Mucosa of descending colon (tissue), 3 donors: ENCODE measurements at regions of chr3 and their contacts with region 1.

Region 1: DNA sequence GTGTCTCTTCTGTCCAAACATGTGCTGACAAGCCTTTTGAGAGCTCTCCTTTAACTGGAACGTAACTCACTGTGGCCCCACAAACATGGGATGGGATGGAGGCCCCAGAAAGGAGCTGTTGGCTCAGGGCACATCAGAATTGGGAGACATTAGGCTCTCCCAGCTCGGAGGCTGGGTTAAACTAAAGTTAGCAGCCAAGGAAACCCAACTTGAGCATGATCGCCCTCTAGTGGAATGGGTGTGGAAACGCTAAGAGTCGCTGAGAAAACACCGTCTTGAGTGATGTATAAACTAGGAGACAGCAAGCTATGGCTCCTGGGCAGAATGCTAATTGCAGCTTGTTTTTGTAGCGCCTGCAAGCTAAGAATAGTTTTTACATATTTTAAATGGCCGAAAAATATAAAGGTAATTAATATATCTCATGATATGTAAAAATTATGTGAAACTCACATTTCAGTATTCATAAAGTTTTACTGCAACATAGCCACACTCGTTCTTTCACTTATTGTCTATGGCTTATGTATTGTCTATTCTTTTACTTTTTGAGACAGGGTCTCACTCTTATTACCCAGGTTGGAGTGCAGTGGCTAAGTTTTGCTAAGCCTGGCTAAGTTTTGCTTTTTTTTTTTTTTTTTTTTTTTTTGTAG is 138.8 kb upstream of the HACD2 start:
- DNase-seq: peak in 1 of 3 donors; percentile 65
- ATAC-seq: peak; percentile 85
- H3K4me3 ChIP-seq: no peak overlapping the region
- H3K4me1 ChIP-seq: no peaks in the 10 kb centered on the region
- CTCF ChIP-seq: peak; percentile 60

Region 2: GRCh38 chr3:123390865-123391600 is 332.6 kb before region 1 on chr3:
- intact Hi-C with region 1: no loop called
- DNase-seq: no peak
- ATAC-seq: no peak
- H3K4me3 ChIP-seq: no peak overlapping the region
- H3K4me1 ChIP-seq: no peaks in the 10 kb centered on the region
- CTCF ChIP-seq: no peak

Region 3: GRCh38 chr3:123642182-123642956 is 81.3 kb before region 1 on chr3:
- intact Hi-C with region 1: loop called in 1 of 2 experiments (anchors 5 kb)
- DNase-seq: peak; percentile 67 to 88 (median 78)
- ATAC-seq: peak; percentile 95
- H3K4me3 ChIP-seq: no peak overlapping the region
- H3K4me1 ChIP-seq: no peaks in the 10 kb centered on the region
- CTCF ChIP-seq: peak; percentile 66

Region 4: DNA sequence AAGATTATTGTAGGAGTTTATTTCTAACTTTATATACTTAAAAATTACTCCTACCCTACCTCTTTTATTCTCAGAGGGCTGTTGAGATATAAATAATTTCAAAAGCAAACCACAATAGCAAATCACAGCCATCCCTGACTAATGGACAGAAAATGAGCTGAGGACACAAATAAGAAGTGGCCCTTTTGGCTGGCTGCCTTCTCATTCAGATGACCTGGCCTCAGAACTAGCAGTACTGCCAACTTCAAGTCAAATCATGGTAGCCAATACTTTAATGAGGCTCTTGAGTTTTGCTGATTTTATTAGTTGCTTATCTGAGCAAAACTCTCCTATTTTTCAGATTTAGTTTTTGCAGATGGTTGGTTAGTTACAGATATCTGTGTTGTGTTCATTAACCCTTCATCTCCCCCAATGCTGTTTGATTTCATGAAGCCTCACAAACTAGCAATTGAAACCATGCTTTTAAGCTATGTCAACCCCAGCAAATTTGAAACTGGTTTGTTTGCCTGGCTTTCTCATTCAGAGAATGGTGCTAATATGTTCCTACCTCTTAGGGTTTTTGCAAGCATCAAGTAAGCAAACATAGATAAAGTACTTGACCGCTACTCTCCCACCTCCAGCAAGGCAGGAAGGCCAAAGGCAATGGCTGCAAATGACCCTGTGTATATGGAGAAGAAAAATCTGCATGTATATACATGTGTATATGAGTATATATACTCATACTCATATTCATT is 65.4 kb before region 1 on chr3:
- intact Hi-C with region 1: loop called in 1 of 2 experiments (anchors 5 kb)
- DNase-seq: peak in 1 of 3 donors; percentile 63
- ATAC-seq: no peak
- H3K4me3 ChIP-seq: no peak overlapping the region
- H3K4me1 ChIP-seq: peaks cover 45% of the 10 kb centered on the region
- CTCF ChIP-seq: no peak